Transverse colon (tissue), 4 donors: ENCODE measurements at regions of chr2 and their contacts with region 1.

Region 1: GRCh38 chr2:12716282-12717190 is at the start of gene TRIB2:
- DNase-seq: peak; percentile 84
- H3K4me3 ChIP-seq: peak within 1 kb of the TSS; percentile 43 to 76 (median 64)
- H3K27ac ChIP-seq: peak within 1 kb of the TSS; percentile 88 to 93 (median 90)
- H3K4me1 ChIP-seq: peaks cover 3 to 32% (median 17%) of the 10 kb centered on the region in 4 donors
- H3K27me3 ChIP-seq: peaks cover 39% of the 10 kb centered on the region
- CTCF ChIP-seq: peak in 1 of 5 experiments; percentile 6
- EP300 ChIP-seq: no peak
- POLR2A ChIP-seq: peak; percentile 47
- total RNA-seq, gene TRIB2: 14.2 to 109 (median 36.1) TPM

Region 2: GRCh38 chr2:11829947-11830707 is 886.4 kb before region 1 on chr2:
- in situ Hi-C with region 1: loop called in 2 of 4 experiments (anchors 25 kb)
- intact Hi-C with region 1: no loop called
- DNase-seq: peak; percentile 50
- H3K4me3 ChIP-seq: peak overlapping the region in 2 of 4 donors; percentile 3 to 22
- H3K27ac ChIP-seq: peak overlapping the region; percentile 50 to 79 (median 72)
- H3K4me1 ChIP-seq: peaks cover 8 to 23% (median 20%) of the 10 kb centered on the region in 4 donors
- H3K27me3 ChIP-seq: no peaks in the 10 kb centered on the region
- CTCF ChIP-seq: peak in 2 of 5 experiments; percentile 9 to 10
- EP300 ChIP-seq: no peak
- POLR2A ChIP-seq: no peak

Region 3: DNA sequence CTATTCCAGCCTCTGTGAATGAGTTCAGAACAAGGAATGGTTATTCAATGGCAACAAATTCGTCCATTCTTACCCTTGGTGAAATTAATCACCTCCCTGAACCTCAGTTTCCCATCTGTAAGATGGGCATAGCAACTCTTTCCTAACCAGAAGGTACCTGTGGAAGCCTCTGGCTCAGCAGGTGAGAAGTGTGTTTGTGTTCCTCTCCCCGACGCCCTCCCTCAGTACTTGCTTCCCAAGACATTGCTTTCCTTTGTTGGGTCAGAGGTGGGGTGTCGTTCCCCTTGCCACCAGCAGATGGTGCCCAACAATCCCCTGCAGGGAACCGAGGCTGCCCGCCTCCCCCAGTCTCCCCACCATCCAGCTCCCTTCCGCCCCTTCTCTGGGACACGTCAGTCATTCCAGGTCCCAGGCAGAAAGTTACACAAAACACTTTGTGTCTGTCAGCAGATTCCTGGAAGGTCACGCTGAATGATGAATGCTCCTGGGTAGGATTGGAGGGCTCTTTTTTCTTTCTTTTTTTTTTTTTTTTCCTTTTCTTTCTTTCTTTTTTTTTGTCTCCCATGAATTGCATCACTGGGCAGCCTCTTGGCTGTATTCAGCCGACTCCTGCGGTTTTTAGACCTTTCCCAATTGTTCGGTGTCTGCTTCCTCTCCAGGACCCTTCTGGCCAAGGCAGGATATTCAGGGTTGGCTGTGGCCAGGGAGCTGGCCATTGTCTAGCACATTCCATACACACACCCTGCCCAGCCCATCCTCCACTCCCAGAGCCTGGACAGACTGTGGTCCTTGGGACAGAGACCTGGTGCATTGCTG is 852.8 kb before region 1 on chr2:
- in situ Hi-C with region 1: loop called in 1 of 4 experiments (anchors 25 kb)
- intact Hi-C with region 1: no loop called
- DNase-seq: peak; percentile 74
- H3K4me3 ChIP-seq: no peak overlapping the region
- H3K27ac ChIP-seq: peak overlapping the region; percentile 13 to 51 (median 26)
- H3K4me1 ChIP-seq: peaks cover 0 to 6% (median 2%) of the 10 kb centered on the region in 4 donors
- H3K27me3 ChIP-seq: no peaks in the 10 kb centered on the region
- CTCF ChIP-seq: peak; percentile 92 to 99 (median 95)
- EP300 ChIP-seq: no peak
- POLR2A ChIP-seq: no peak

Region 4: DNA sequence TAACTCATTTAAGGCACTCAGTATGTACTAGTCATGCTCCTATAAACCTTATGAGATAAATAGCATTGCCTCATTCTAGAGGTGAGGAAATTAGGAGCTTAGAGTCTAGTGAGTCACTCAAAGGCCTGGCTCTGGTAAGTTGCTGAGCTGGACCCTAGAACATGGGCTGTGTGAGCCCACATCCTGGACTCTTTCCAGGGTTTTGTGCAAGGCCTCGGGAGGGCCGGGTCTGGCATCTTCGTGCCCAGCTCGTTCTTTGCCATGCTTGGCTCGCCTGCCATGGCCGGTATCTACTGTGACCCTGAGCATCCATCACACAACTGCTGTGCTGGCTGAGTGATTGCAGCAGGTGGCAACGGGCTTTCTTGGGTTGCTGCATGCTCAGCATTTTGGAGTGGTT is 802.1 kb before region 1 on chr2:
- in situ Hi-C with region 1: no loop called
- intact Hi-C with region 1: no loop called
- DNase-seq: no peak
- H3K4me3 ChIP-seq: no peak overlapping the region
- H3K27ac ChIP-seq: no peak overlapping the region
- H3K4me1 ChIP-seq: no peaks in the 10 kb centered on the region
- H3K27me3 ChIP-seq: no peaks in the 10 kb centered on the region
- CTCF ChIP-seq: no peak
- EP300 ChIP-seq: no peak
- POLR2A ChIP-seq: no peak

Region 5: GRCh38 chr2:12169721-12170120 is 546.8 kb before region 1 on chr2:
- in situ Hi-C with region 1: loop called in 1 of 4 experiments (anchors 25 kb)
- intact Hi-C with region 1: no loop called
- DNase-seq: peak; percentile 13
- H3K4me3 ChIP-seq: no peak overlapping the region
- H3K27ac ChIP-seq: peak overlapping the region; percentile 48 to 71 (median 70)
- H3K4me1 ChIP-seq: peaks cover 8 to 20% (median 16%) of the 10 kb centered on the region in 4 donors
- H3K27me3 ChIP-seq: no peaks in the 10 kb centered on the region
- CTCF ChIP-seq: no peak
- EP300 ChIP-seq: no peak
- POLR2A ChIP-seq: no peak

Region 6: DNA sequence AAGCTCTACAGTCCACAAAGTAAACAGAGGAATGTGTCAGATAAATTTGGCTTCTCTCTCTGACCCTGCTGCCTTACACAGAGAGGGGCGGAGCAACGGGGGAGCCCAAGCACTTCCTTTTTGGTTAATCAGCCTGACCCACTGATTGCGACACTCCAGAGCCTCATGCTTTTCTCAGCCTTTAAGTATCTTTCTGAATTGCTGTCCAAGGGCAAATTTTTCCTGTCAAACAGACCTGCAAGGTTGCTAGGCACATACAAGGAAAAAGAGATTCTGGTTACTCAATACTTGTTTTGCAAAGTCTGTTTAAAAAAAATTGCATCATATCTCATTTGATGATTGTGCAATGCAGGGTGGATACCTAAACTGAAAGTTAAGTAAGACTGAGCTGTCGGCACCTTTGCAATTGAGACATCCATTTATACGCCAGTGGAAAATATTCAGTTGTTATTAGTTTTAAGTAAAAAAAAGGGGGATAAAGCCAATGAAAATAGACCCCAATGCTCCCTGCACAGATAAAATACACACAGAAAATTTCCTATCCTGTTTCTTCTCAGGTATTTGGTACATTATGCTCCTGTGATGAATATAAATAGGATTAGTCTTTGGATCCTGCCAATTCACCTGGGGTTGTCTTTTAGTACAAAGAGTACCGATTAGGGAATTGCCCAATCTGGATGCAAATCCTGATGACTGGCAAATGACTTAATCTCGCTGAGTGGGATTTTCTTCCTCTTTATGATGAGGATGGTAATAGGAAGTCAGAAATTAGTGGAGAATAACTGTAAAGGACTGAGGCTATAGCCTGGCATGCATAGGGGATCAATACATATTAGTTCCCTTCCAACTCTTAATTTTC is 260.0 kb before region 1 on chr2:
- in situ Hi-C with region 1: no loop called
- intact Hi-C with region 1: loop called (anchors 10 kb)
- DNase-seq: peak; percentile 81
- H3K4me3 ChIP-seq: peak overlapping the region in 1 of 4 donors; percentile 4
- H3K27ac ChIP-seq: peak overlapping the region; percentile 15 to 62 (median 60)
- H3K4me1 ChIP-seq: peaks cover 0 to 25% (median 5%) of the 10 kb centered on the region in 4 donors
- H3K27me3 ChIP-seq: no peaks in the 10 kb centered on the region
- CTCF ChIP-seq: no peak
- EP300 ChIP-seq: peak; percentile 30
- POLR2A ChIP-seq: no peak

Region 7: DNA sequence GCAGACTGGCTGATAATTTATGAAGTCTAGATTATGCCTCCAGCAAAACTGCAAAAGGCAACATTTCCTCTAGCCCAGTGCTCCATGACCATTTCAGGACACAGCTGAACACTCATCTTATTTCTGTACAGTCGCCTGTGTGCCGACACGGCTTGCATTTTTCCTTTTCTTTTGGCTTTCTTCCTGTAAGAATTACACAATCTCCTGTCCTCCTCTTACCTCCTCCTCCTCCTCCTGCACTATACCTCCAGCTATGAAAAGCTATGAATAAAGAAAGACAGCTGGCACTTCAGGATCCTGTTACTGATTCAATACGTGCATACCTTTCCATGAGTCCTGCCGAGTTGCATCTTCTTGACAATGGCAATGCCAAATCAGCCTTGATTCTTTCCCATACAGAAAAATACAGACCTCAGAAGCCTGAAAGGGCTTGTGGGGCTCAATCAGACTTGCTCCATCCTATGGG is 32.0 kb before region 1 on chr2:
- in situ Hi-C with region 1: no loop called
- intact Hi-C with region 1: no loop called
- DNase-seq: no peak
- H3K4me3 ChIP-seq: no peak overlapping the region
- H3K27ac ChIP-seq: peak overlapping the region; percentile 38 to 78 (median 60)
- H3K4me1 ChIP-seq: peaks cover 0 to 13% (median 0%) of the 10 kb centered on the region in 4 donors
- H3K27me3 ChIP-seq: no peaks in the 10 kb centered on the region
- CTCF ChIP-seq: no peak
- EP300 ChIP-seq: no peak
- POLR2A ChIP-seq: no peak

Region 8: DNA sequence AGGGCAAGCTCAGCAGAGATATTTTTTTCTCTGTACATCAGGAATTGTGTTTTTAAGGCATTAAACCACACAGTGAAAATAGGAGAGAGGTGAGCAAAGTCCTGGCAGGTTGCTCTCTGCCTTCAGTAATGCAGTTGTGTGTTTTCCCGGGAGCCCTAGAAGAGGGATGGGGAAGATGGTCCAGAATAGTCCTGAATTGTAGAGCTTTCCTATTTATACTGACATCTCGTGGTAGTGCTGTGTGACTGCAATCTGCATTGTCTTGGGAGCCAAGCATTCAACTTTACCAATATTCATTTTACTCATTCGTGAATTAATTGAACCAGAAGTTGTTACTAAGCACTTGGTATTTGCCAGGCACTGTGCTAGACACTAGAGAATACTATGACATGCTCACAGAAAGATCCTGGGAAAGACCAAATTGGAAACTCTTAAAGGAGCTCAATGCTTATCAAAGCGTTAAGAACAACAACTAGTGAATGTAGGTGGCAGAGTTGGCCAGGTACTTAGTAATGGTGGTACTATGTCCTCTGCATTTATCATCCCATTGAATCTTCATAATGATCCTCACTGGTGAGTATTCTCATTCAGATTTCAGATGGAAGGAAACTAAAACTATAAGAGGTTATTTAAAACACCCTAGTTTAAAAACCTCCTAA is 214.8 kb after region 1 on chr2:
- in situ Hi-C with region 1: loop called in 1 of 4 experiments (anchors 10 kb)
- intact Hi-C with region 1: loop called (anchors 2 kb)
- DNase-seq: no peak
- H3K4me3 ChIP-seq: no peak overlapping the region
- H3K27ac ChIP-seq: no peak overlapping the region
- H3K4me1 ChIP-seq: peaks cover 0 to 14% (median 5%) of the 10 kb centered on the region in 4 donors
- H3K27me3 ChIP-seq: no peaks in the 10 kb centered on the region
- CTCF ChIP-seq: peak; percentile 64 to 82 (median 75)
- EP300 ChIP-seq: no peak
- POLR2A ChIP-seq: no peak

Region 9: GRCh38 chr2:13006829-13007717 is 290.5 kb after region 1 on chr2:
- in situ Hi-C with region 1: loop called in 1 of 4 experiments (anchors 10 kb)
- intact Hi-C with region 1: no loop called
- DNase-seq: peak; percentile 48
- H3K4me3 ChIP-seq: no peak overlapping the region
- H3K27ac ChIP-seq: peak overlapping the region in 3 of 4 donors; percentile 18 to 28 (median 20)
- H3K4me1 ChIP-seq: peaks cover 0 to 15% (median 0%) of the 10 kb centered on the region in 4 donors
- H3K27me3 ChIP-seq: no peaks in the 10 kb centered on the region
- CTCF ChIP-seq: peak; percentile 71 to 90 (median 82)
- EP300 ChIP-seq: no peak
- POLR2A ChIP-seq: no peak